Activated CD4-positive, alpha-beta T cell treated with anti-CD3 and anti-CD28 coated beads for 36 hours (primary cell): ENCODE measurements at regions of chr1 and their contacts with region 1.

Region 1: DNA sequence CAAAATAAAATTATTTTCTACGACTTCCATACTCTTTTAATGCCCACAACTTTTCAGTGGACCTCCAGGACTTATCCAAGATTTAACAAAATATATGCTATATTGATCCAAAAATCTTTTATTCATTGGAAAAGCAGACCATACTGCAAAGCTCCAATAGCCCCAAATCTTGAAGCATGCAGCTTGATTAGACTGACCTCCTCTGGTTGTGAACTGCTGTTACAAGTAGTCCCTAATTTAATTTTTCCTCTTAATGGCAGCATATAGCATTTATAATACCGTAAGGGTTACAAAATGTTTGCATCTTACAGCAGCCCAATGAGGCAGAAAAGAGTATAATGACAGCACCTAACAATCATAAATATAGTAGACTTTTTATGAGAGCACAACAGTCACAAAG is 49.8 kb downstream of the TPR start:
- DNase-seq: no peak
- ATAC-seq: no peak
- H3K4me3 Mint-ChIP-seq: no peak overlapping the region
- H3K27ac Mint-ChIP-seq: no peak overlapping the region
- H3K4me1 Mint-ChIP-seq: peaks cover 14% of the 10 kb centered on the region
- H3K27me3 Mint-ChIP-seq: no peaks in the 10 kb centered on the region

Region 2: GRCh38 chr1:186155594-186155993 is 169.6 kb before region 1 on chr1:
- CTCF ChIA-PET with region 1: interaction called, 3 read pairs
- POLR2A ChIA-PET with region 1: no interaction called
- intact Hi-C with region 1: loop called in 1 of 2 experiments (anchors 5 kb)
- DNase-seq: peak; percentile 15
- ATAC-seq: peak; percentile 79
- H3K4me3 Mint-ChIP-seq: no peak overlapping the region
- H3K27ac Mint-ChIP-seq: no peak overlapping the region
- H3K4me1 Mint-ChIP-seq: no peaks in the 10 kb centered on the region
- H3K27me3 Mint-ChIP-seq: no peaks in the 10 kb centered on the region

Region 3: DNA sequence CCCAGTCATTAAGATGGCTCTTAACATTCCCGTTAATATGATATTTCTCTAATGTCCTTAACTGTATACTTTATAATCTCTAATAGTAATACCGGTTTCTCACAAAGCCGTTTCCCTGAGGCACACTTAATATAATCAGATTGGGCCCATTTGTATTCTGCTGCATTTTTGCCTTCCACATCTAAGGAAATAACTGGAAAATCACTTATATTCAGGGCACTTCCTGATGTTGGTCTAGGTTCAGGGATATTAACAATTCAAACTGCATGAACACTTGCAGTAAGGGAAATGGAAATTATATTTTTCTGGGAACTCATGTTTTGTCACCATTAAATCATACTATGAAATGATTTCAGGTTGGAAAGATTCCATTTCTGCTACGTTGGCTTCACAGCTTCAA is 70.0 kb before region 1 on chr1:
- CTCF ChIA-PET with region 1: no interaction called
- POLR2A ChIA-PET with region 1: no interaction called
- intact Hi-C with region 1: no loop called
- DNase-seq: no peak
- ATAC-seq: no peak
- H3K4me3 Mint-ChIP-seq: no peak overlapping the region
- H3K27ac Mint-ChIP-seq: no peak overlapping the region
- H3K4me1 Mint-ChIP-seq: no peaks in the 10 kb centered on the region
- H3K27me3 Mint-ChIP-seq: peaks cover 8% of the 10 kb centered on the region

Region 4: GRCh38 chr1:186272486-186272885 is 52.8 kb before region 1 on chr1:
- CTCF ChIA-PET with region 1: interaction called, 15 read pairs
- POLR2A ChIA-PET with region 1: no interaction called
- intact Hi-C with region 1: loop called (anchors 1 to 5 kb)
- DNase-seq: no peak
- ATAC-seq: peak; percentile 89
- H3K4me3 Mint-ChIP-seq: no peak overlapping the region
- H3K27ac Mint-ChIP-seq: peak overlapping the region; percentile 28
- H3K4me1 Mint-ChIP-seq: peaks cover 18% of the 10 kb centered on the region
- H3K27me3 Mint-ChIP-seq: no peaks in the 10 kb centered on the region

Region 5: DNA sequence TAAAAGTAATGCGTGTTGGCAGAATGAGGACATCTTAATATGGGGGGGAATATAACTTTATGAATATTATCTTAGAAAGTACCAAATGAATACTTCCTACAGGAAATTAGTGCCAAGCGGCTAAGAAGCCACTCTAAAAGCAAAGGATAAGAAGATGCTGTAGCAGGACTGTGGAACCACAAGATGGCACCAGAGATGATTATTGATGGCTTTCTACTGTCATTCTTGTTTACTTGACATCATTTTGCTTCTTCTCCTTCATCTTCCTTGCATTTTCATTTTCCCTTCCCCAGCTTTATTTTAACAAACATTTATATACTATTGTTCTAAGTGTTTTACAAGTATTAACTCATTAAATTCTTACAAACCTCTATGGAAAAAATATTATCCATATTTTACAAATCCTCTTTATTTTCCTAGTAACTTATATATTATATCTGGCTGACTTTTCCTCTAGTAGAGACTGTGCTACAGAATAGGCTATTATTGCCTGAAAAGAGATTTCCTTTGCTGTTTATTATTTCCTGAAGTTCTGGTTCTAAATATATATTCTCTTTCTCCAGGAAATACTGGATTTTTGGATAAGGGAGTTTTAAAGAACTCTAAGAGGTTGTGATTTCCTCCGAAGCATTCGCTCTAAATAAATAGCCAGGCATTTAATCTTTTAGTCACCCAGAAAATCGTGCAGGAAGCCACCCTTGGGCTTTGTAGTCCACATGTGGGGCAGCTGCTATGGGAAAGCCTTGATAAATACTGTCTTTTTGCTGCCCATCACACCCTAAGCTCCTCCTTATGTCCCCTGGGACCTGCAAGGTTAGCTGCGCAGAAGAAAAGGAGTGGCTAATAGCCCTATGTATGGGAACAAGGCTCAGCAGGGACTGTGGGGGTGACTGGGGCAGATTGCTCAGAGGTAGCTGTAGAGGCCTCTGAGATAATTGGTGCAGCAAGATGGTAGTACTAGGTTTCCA is 20.0 kb before region 1 on chr1:
- CTCF ChIA-PET with region 1: interaction called, 16 read pairs
- POLR2A ChIA-PET with region 1: no interaction called
- intact Hi-C with region 1: loop called in 1 of 2 experiments (anchors 2 kb)
- DNase-seq: peak; percentile 22
- ATAC-seq: no peak
- H3K4me3 Mint-ChIP-seq: no peak overlapping the region
- H3K27ac Mint-ChIP-seq: peak overlapping the region; percentile 76
- H3K4me1 Mint-ChIP-seq: peaks cover 57% of the 10 kb centered on the region
- H3K27me3 Mint-ChIP-seq: no peaks in the 10 kb centered on the region

Region 6: DNA sequence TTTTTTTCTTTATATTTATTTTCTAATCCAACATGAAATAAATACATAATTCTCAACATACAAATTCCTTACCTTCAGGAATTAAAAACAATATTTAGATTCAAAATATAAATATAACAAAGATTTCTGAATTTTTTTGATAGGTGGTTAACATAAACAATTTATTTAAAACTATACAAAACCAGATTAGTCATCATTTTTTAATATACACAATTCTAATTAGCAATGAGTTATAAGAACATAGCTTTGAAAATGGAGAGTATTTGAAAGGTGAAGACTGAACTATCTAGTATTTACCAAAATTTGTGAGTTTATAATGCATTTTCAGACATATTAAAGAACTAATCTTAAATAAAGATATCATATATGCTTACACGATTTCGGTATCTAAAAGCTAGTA is 12.3 kb after region 1 on chr1:
- CTCF ChIA-PET with region 1: interaction called, 94 read pairs
- POLR2A ChIA-PET with region 1: interaction called, 3 read pairs
- intact Hi-C with region 1: loop called in 1 of 2 experiments (anchors 2 kb)
- DNase-seq: no peak
- ATAC-seq: no peak
- H3K4me3 Mint-ChIP-seq: no peak overlapping the region
- H3K27ac Mint-ChIP-seq: no peak overlapping the region
- H3K4me1 Mint-ChIP-seq: no peaks in the 10 kb centered on the region
- H3K27me3 Mint-ChIP-seq: no peaks in the 10 kb centered on the region

Region 7: DNA sequence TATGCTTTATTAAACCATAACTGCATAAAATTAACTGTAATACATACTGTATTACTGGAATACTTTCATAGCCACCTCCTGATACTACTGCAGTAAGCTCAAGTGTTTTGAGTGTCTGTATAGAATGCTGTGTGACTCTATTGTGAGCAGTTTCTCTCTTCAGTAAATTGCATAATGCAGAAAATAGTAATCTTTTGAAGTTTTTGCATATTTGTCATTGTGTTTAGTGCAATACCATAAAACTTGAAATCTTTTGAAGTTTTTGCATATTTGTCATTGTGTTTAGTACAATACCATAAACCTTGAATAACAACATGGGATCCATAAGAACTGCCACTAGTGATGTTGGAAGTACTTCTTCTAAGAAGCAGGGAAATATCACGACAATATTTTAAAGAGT is 38.7 kb after region 1 on chr1:
- CTCF ChIA-PET with region 1: interaction called, 13 read pairs
- POLR2A ChIA-PET with region 1: interaction called, 7 read pairs
- intact Hi-C with region 1: loop called in 1 of 2 experiments (anchors 5 kb)
- DNase-seq: no peak
- ATAC-seq: no peak
- H3K4me3 Mint-ChIP-seq: no peak overlapping the region
- H3K27ac Mint-ChIP-seq: no peak overlapping the region
- H3K4me1 Mint-ChIP-seq: peaks cover 6% of the 10 kb centered on the region
- H3K27me3 Mint-ChIP-seq: no peaks in the 10 kb centered on the region